ENCODE measurements at regions of chr19 and their contacts with region 1.

Region 1: GRCh38 chr19:48965040-48965805 is at the start of gene FTL:
- DNase-seq: peak; percentile 99
- ATAC-seq: peak; percentile 11 to 51
- H3K4me3 ChIP-seq: peak within 1 kb of the TSS; percentile 66
- H3K27ac ChIP-seq: peak within 1 kb of the TSS; percentile 92 to 96
- H3K4me1 ChIP-seq: peaks cover 62% of the 10 kb centered on the region
- CTCF ChIP-seq: no peak
- EP300 ChIP-seq: peak in 1 of 2 experiments; percentile 58; a peak in 1 of 5 replicates
- POLR2A ChIP-seq: peak; percentile 99
- RAD21 ChIP-seq: 0 out of 5 replicates have a peak, but pooled peaks have one; percentile 18 to 21
- polyA plus RNA-seq, gene FTL: 4,743 and 7,067 TPM in 2 replicates

Region 2: DNA sequence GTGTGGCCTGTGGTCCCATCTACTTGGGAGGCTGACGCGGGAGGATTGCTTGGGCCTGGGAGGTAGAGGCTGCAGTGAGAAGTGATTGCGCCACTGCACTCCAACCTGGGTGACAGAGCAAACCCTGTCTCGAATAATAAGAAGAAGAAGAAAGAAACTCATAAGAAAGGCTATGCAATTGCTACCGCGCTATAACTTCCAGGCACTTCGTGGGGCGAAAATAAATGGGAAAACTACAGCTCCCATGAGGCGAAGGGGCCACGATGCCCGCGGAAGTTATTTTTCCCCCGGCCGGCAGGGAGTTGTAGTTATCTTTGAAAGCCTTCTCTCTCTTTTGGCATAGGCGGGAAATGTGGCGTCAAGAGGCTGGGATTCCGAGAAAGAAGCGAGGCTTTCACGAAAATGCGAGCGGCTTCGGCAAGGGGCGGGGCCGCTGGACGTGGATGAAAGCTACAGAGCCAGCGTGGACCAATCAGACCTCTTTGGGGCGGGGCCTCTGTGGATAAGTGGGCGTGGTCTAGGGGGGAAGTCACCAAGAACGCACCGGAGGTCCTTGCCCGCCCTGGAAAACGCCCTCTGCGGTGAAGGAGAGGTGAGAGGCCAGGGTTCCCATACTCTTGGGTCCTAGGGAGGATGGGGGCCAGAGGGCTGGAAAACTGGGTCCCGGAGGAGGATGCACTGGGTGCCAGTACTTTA is 65.3 kb before region 1 on chr19 and contains the start of gene NUCB1:
- CTCF ChIA-PET with region 1: interaction called, 15 read pairs
- POLR2A ChIA-PET with region 1: interaction called, 15 read pairs
- DNase-seq: peak; percentile 99 to 100
- ATAC-seq: peak; percentile 93 to 97
- H3K4me3 ChIP-seq: peak within 1 kb of the TSS; percentile 83
- H3K27ac ChIP-seq: peak within 1 kb of the TSS; percentile 87 to 90
- H3K4me1 ChIP-seq: peaks cover 20% of the 10 kb centered on the region; the same call in 2 of the 3 replicates
- CTCF ChIP-seq: no peak
- EP300 ChIP-seq: no peak
- POLR2A ChIP-seq: peak; percentile 64
- RAD21 ChIP-seq: peak; percentile 36 to 52; a peak in 2 of 5 replicates
- polyA plus RNA-seq, gene NUCB1: 58.5 and 79.5 TPM in 2 replicates

Region 3: GRCh38 chr19:48926909-48927308 is 38.3 kb before region 1 on chr19:
- CTCF ChIA-PET with region 1: interaction called, 36 read pairs
- POLR2A ChIA-PET with region 1: interaction called, 18 read pairs
- DNase-seq: peak; percentile 65 to 87
- ATAC-seq: peak; percentile 67 to 84
- H3K4me3 ChIP-seq: no peak overlapping the region
- H3K27ac ChIP-seq: peak overlapping the region; percentile 67 to 85
- H3K4me1 ChIP-seq: peaks cover 41% of the 10 kb centered on the region
- CTCF ChIP-seq: no peak
- EP300 ChIP-seq: peak in 1 of 2 experiments; percentile 39; a peak in 1 of 5 replicates
- POLR2A ChIP-seq: no peak
- RAD21 ChIP-seq: no peak

Region 4: DNA sequence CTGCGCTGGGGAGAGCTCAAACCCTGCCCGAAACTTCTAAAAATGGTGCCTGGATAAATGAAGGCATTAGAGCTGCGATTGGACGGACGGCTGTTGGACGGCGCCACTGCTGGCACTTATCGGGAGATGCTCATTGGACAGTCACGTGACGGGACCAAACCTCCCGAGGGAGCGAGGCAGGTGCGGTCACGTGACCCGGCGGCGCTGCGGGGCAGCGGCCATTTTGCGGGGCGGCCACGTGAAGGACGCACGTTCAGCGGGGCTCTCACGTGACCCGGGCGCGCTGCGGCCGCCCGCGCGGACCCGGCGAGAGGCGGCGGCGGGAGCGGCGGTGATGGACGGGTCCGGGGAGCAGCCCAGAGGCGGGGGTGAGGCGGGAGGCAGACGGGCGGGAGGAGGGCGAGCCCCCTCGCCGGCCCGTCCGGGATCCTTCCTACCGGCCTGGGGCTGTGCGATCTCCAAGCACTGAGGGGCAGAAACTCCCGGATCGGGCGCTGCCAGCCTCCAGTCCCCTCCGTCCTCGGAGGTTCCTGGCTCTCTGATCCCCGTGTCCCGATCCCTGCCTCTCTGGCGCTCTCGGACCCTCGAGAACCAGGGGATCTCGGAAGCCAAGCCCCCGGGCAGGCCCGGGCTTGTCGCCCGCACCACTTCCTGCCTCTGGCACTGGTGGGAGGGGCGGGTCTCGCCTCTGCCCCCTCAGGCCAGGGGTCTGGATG is 10.5 kb before region 1 on chr19 and contains the start of gene BAX:
- CTCF ChIA-PET with region 1: interaction called, 39 read pairs
- POLR2A ChIA-PET with region 1: interaction called, 47 read pairs
- DNase-seq: peak; percentile 99 to 100
- ATAC-seq: peak; percentile 90 to 92
- H3K4me3 ChIP-seq: peak within 1 kb of the TSS; percentile 83
- H3K27ac ChIP-seq: peak within 1 kb of the TSS; percentile 96 to 97
- H3K4me1 ChIP-seq: peaks cover 15% of the 10 kb centered on the region
- CTCF ChIP-seq: no peak
- EP300 ChIP-seq: no peak
- POLR2A ChIP-seq: peak; percentile 67
- RAD21 ChIP-seq: peak; percentile 31 to 63
- polyA plus RNA-seq, gene BAX: 120 and 134 TPM in 2 replicates

Region 5: GRCh38 chr19:48975947-48976847 is 11.0 kb after region 1 on chr19:
- CTCF ChIA-PET with region 1: interaction called, 100 read pairs
- POLR2A ChIA-PET with region 1: interaction called, 15 read pairs
- DNase-seq: peak in 1 of 2 experiments; percentile 47
- ATAC-seq: peak; percentile 46 to 72; a peak in 5 of 6 replicates
- H3K4me3 ChIP-seq: no peak overlapping the region
- H3K27ac ChIP-seq: no peak overlapping the region
- H3K4me1 ChIP-seq: peaks cover 13% of the 10 kb centered on the region
- CTCF ChIP-seq: no peak
- EP300 ChIP-seq: no peak
- POLR2A ChIP-seq: no peak
- RAD21 ChIP-seq: no peak

Region 6: GRCh38 chr19:48993175-48994034 is 28.2 kb after region 1 on chr19 and contains the starts of genes GYS1 and RUVBL2:
- CTCF ChIA-PET with region 1: interaction called, 360 read pairs
- POLR2A ChIA-PET with region 1: interaction called, 11 read pairs
- DNase-seq: peak; percentile 100
- ATAC-seq: peak; percentile 89 to 94
- H3K4me3 ChIP-seq: peak within 1 kb of the TSS; percentile 73
- H3K27ac ChIP-seq: peak within 1 kb of the TSS; percentile 76 to 87
- H3K4me1 ChIP-seq: peaks cover 20% of the 10 kb centered on the region
- CTCF ChIP-seq: peak; percentile 82
- EP300 ChIP-seq: no peak
- POLR2A ChIP-seq: peak; percentile 92
- RAD21 ChIP-seq: peak in 1 of 2 experiments; percentile 39; a peak in 2 of 5 replicates
- polyA plus RNA-seq, gene GYS1: 10.3 and 16.4 TPM in 2 replicates
- polyA plus RNA-seq, gene RUVBL2: 146 and 186 TPM in 2 replicates